Activated CD8-positive, alpha-beta T cell treated with anti-CD3 and anti-CD28 coated beads for 36 hours (primary cell): ENCODE measurements at regions of chr10 and their contacts with region 1.

Region 1: DNA sequence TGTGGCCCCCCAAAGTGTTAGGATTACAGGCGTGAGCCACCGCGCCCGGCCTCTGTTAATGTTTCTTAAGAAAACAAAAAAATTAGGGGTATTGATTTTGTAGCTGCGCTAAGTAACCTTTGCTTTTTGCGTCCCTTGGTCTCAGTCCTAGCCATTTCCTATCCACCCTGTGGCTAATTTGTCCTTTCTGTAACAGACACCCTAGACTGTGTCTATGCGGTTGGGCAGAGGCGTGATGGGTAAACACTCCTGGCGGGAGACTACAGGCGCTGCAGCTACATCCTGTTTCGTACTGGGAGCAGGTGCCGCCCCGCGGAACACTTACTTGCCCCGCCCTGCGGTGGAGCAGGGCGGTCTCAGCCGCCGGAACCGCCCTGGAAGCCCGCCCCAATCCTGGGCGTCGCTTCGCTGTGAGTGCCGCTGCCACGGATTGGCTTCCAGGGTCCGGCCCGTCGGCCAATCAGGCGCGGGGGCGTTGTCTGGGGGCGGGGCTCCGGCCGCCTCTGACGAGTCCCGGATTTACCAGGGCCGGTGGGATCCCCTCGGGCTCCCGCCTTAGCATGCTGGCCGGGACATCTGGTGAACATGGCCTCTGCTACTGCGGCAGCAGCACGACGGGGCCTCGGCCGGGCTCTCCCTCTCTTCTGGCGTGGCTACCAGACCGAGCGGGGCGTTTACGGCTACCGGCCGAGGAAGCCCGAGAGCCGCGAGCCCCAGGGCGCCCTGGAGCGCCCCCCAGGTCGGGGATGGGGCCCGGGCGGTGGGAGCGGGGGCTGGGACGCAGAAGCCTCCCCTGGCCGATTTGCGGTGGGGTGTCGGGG is at the start of gene DHTKD1:
- DNase-seq: peak; percentile 99
- ATAC-seq: peak; percentile 100
- H3K4me3 Mint-ChIP-seq: peak within 1 kb of the TSS; percentile 81
- H3K27ac Mint-ChIP-seq: peak within 1 kb of the TSS; percentile 92
- H3K4me1 Mint-ChIP-seq: peaks cover 17% of the 10 kb centered on the region
- H3K27me3 Mint-ChIP-seq: no peaks in the 10 kb centered on the region
- CTCF ChIP-seq: peak; percentile 59
- total RNA-seq, gene DHTKD1: 13.1 to 13.5 TPM

Region 2: GRCh38 chr10:12129222-12130111 is 60.8 kb after region 1 on chr10 and contains the start of gene SEC61A2:
- CTCF ChIA-PET with region 1: interaction called, 4 read pairs
- POLR2A ChIA-PET with region 1: interaction called, 4 read pairs
- intact Hi-C with region 1: loop called (anchors 2 kb)
- DNase-seq: peak; percentile 96
- ATAC-seq: peak; percentile 96
- H3K4me3 Mint-ChIP-seq: peak within 1 kb of the TSS; percentile 88
- H3K27ac Mint-ChIP-seq: peak within 1 kb of the TSS; percentile 78
- H3K4me1 Mint-ChIP-seq: peaks cover 21% of the 10 kb centered on the region
- H3K27me3 Mint-ChIP-seq: no peaks in the 10 kb centered on the region
- CTCF ChIP-seq: no peak
- total RNA-seq, gene SEC61A2: 10.8 to 12.0 TPM